ENCODE measurements at regions of chr5 and their contacts with region 1.

Region 1: DNA sequence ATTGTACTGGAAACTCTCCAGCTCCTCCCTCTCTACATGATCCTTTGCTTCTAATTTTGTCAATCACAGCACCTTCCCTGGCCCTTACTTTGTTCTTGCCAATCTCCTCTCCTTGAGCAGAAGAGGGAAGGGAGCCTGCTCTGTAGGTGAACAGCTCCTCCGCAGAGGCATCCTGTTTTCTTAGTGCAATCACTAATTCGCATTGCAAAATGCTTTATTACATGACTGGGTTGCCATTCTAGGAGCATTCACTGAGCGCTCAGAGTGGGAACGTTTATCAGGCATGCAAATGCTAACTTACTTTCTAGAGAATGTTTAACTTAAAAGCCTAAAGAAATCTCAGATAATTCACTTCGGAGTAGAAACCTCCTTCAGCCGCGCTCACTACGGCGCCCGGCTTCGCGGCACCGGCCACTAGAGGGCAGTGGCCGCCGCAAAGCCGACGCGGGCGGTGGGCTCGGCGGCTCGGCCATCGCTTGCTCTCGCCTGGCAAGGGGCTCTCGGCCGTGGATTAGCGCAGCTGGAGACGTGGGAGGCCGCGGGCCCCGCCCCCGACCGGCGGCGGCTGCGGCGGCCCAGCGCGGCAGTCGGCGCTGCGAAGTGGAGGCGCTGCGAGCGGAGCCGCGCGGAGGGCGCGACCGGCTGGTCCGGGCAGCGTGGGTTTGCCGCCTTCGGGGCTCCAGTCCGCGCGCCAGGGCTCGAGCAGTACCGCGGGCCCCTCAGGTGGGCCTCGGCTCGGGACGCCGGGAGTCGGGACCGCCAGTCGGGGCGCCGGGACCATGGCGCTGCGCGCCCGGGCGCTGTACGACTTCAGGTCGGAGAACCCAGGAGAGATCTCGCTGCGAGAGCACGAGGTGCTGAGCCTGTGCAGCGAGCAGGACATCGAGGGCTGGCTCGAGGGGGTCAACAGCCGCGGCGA is at the start of gene SNX18:
- DNase-seq: peak; percentile 24
- ATAC-seq: peak; percentile 98
- H3K4me3 ChIP-seq: peak within 1 kb of the TSS; percentile 73; the same call in 1 of the 2 replicates
- H3K27ac ChIP-seq: peak within 1 kb of the TSS; percentile 33; the same call in 1 of the 2 replicates
- H3K4me1 ChIP-seq: no peaks in the 10 kb centered on the region
- H3K27me3 ChIP-seq: no peaks in the 10 kb centered on the region
- CTCF ChIP-seq: peak; percentile 89 to 98 (median 95); a peak in 5 of 6 replicates
- EP300 ChIP-seq: no peak
- POLR2A ChIP-seq: peak; percentile 73
- RAD21 ChIP-seq: peak; percentile 99
- polyA plus RNA-seq, gene SNX18: 0.27 to 0.32 TPM

Region 2: GRCh38 chr5:54224103-54224826 is 293.2 kb before region 1 on chr5:
- CTCF ChIA-PET with region 1: no interaction called
- POLR2A ChIA-PET with region 1: no interaction called
- RAD21 ChIA-PET with region 1: no interaction called
- SMC1A ChIA-PET with region 1: no interaction called
- in situ Hi-C with region 1: no loop called
- intact Hi-C with region 1: no loop called
- DNase-seq: no peak
- ATAC-seq: no peak
- H3K4me3 ChIP-seq: no peak overlapping the region
- H3K27ac ChIP-seq: no peak overlapping the region
- H3K4me1 ChIP-seq: no peaks in the 10 kb centered on the region
- H3K27me3 ChIP-seq: no peaks in the 10 kb centered on the region
- CTCF ChIP-seq: no peak
- EP300 ChIP-seq: no peak
- POLR2A ChIP-seq: no peak
- RAD21 ChIP-seq: no peak

Region 3: DNA sequence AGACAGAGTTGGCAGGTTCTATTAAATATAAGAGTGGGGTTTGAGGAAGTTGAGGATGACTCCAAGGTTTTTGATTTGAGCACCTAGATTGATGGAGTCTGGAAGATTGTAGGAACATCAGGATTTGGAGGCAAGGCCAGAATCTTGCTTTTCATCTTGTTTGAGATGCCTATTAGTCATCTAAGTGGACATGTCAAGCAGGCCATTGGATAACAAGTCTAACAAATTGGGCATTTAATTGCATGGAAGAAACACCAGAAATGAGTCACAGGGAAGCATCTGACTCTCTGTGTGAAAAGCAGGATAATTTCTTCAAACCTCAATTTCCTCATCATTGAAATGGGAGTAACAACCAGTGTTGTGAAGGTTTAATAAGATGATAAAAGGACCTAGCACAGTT is 153.8 kb before region 1 on chr5:
- CTCF ChIA-PET with region 1: no interaction called
- POLR2A ChIA-PET with region 1: no interaction called
- RAD21 ChIA-PET with region 1: no interaction called
- SMC1A ChIA-PET with region 1: no interaction called
- in situ Hi-C with region 1: no loop called
- intact Hi-C with region 1: no loop called
- DNase-seq: no peak
- ATAC-seq: no peak
- H3K4me3 ChIP-seq: no peak overlapping the region
- H3K27ac ChIP-seq: no peak overlapping the region
- H3K4me1 ChIP-seq: no peaks in the 10 kb centered on the region
- H3K27me3 ChIP-seq: no peaks in the 10 kb centered on the region
- CTCF ChIP-seq: no peak
- EP300 ChIP-seq: no peak
- POLR2A ChIP-seq: no peak
- RAD21 ChIP-seq: no peak

Region 4: GRCh38 chr5:54480296-54480695 is 37.1 kb before region 1 on chr5:
- CTCF ChIA-PET with region 1: no interaction called
- POLR2A ChIA-PET with region 1: no interaction called
- RAD21 ChIA-PET with region 1: no interaction called
- SMC1A ChIA-PET with region 1: no interaction called
- in situ Hi-C with region 1: no loop called
- intact Hi-C with region 1: no loop called
- DNase-seq: no peak
- ATAC-seq: no peak
- H3K4me3 ChIP-seq: no peak overlapping the region
- H3K27ac ChIP-seq: no peak overlapping the region
- H3K4me1 ChIP-seq: no peaks in the 10 kb centered on the region
- H3K27me3 ChIP-seq: no peaks in the 10 kb centered on the region
- CTCF ChIP-seq: no peak
- EP300 ChIP-seq: no peak
- POLR2A ChIP-seq: no peak
- RAD21 ChIP-seq: no peak

Region 5: GRCh38 chr5:54646356-54647101 is 129.1 kb after region 1 on chr5:
- CTCF ChIA-PET with region 1: no interaction called
- POLR2A ChIA-PET with region 1: no interaction called
- RAD21 ChIA-PET with region 1: no interaction called
- SMC1A ChIA-PET with region 1: no interaction called
- in situ Hi-C with region 1: no loop called
- intact Hi-C with region 1: loop called (anchors 5 kb)
- DNase-seq: peak; percentile 48
- ATAC-seq: peak; percentile 96
- H3K4me3 ChIP-seq: peak overlapping the region; percentile 5; the same call in 1 of the 2 replicates
- H3K27ac ChIP-seq: peak overlapping the region; percentile 50; the same call in 1 of the 2 replicates
- H3K4me1 ChIP-seq: peaks cover 20% of the 10 kb centered on the region
- H3K27me3 ChIP-seq: no peaks in the 10 kb centered on the region
- CTCF ChIP-seq: no peak
- EP300 ChIP-seq: peak in 1 of 2 experiments; percentile 39; a peak in 1 of 4 replicates
- POLR2A ChIP-seq: no peak
- RAD21 ChIP-seq: no peak

Region 6: DNA sequence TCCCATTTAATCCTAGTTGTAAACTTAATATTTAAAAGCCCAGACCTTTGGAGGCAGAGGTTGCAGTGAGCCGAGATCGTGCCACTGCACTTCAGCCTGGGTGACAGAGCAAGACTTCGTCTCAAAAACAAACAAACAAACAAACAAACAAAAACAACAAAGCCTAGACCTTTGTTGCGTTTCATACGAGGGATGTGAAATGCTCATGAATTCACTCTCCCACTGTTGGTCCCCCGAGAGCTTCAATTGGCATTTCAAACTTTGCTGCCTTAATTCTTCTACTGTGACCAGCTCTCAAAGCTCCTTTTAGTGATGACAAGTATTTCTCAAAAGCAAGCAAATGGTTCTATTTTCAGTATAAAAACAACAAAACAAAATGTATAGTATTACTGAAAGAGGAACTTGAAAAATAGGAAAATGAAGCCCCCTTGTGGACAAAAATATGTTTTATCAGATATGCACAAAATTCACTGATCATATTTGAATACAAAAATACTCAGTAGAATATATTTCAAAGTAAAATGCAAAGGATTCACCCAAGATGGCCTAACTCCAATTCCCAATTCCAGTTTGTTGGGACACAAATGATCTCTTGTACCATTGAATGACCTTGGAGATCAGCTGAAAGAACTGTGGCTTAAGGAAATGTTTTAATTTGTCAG is 327.6 kb after region 1 on chr5:
- CTCF ChIA-PET with region 1: interaction called, 71 read pairs
- POLR2A ChIA-PET with region 1: no interaction called
- RAD21 ChIA-PET with region 1: interaction called, 25 read pairs
- SMC1A ChIA-PET with region 1: interaction called, 34 read pairs
- in situ Hi-C with region 1: loop called (anchors 5 kb)
- intact Hi-C with region 1: loop called (anchors 1 kb)
- DNase-seq: peak; percentile 4
- ATAC-seq: peak; percentile 50; the same call in 2 of the 3 replicates
- H3K4me3 ChIP-seq: no peak overlapping the region
- H3K27ac ChIP-seq: no peak overlapping the region
- H3K4me1 ChIP-seq: no peaks in the 10 kb centered on the region
- H3K27me3 ChIP-seq: no peaks in the 10 kb centered on the region
- CTCF ChIP-seq: peak in 1 of 3 experiments; percentile 50; a peak in 3 of 6 replicates
- EP300 ChIP-seq: no peak
- POLR2A ChIP-seq: no peak
- RAD21 ChIP-seq: peak; percentile 68

Region 7: GRCh38 chr5:54852007-54852406 is 334.6 kb after region 1 on chr5:
- CTCF ChIA-PET with region 1: no interaction called
- POLR2A ChIA-PET with region 1: no interaction called
- RAD21 ChIA-PET with region 1: no interaction called
- SMC1A ChIA-PET with region 1: no interaction called
- in situ Hi-C with region 1: loop called (anchors 5 kb)
- intact Hi-C with region 1: no loop called
- DNase-seq: no peak
- ATAC-seq: no peak
- H3K4me3 ChIP-seq: no peak overlapping the region
- H3K27ac ChIP-seq: no peak overlapping the region
- H3K4me1 ChIP-seq: no peaks in the 10 kb centered on the region
- H3K27me3 ChIP-seq: no peaks in the 10 kb centered on the region
- CTCF ChIP-seq: no peak
- EP300 ChIP-seq: no peak
- POLR2A ChIP-seq: no peak
- RAD21 ChIP-seq: no peak

Region 8: DNA sequence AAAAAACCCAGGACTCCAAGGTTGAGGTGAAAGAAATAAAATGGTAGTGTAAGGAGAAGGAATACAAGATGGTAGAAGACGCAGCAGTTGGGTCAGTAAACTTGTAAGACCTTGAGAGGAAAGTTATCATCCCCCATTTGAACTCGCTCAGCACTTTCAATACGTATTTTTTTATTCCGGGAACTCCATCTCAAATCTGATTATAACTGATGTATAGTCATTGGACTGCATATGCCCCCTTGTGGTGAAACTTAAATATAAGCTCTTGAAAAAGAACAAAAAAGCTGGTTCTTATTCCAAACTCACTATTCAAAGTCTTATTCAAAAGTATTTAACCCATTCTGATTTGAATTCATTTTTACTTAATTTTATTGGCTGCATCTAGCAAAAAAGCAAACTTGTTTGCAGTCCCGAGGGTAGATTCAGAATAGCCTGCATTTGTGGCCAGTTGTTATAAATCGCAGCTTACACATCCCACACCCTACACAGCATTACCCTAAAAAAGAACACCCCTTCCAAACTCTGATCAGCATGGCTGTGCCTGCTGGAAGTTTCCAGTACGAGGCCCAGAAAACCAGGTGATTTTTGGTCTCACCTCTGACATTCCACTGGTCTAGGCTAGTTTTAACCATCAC is 350.0 kb after region 1 on chr5:
- CTCF ChIA-PET with region 1: interaction called, 33 read pairs
- POLR2A ChIA-PET with region 1: no interaction called
- RAD21 ChIA-PET with region 1: interaction called, 18 read pairs
- SMC1A ChIA-PET with region 1: interaction called, 27 read pairs
- in situ Hi-C with region 1: no loop called
- intact Hi-C with region 1: loop called (anchors 1 kb)
- DNase-seq: no peak
- ATAC-seq: peak; percentile 38; the same call in 1 of the 3 replicates
- H3K4me3 ChIP-seq: no peak overlapping the region
- H3K27ac ChIP-seq: no peak overlapping the region
- H3K4me1 ChIP-seq: no peaks in the 10 kb centered on the region
- H3K27me3 ChIP-seq: peaks cover 2 to 4% of the 10 kb centered on the region in 2 experiments; a peak in 2 of 4 replicates
- CTCF ChIP-seq: peak; percentile 36 to 47 (median 46); a peak in 5 of 6 replicates
- EP300 ChIP-seq: no peak
- POLR2A ChIP-seq: no peak
- RAD21 ChIP-seq: peak; percentile 56

Region 9: DNA sequence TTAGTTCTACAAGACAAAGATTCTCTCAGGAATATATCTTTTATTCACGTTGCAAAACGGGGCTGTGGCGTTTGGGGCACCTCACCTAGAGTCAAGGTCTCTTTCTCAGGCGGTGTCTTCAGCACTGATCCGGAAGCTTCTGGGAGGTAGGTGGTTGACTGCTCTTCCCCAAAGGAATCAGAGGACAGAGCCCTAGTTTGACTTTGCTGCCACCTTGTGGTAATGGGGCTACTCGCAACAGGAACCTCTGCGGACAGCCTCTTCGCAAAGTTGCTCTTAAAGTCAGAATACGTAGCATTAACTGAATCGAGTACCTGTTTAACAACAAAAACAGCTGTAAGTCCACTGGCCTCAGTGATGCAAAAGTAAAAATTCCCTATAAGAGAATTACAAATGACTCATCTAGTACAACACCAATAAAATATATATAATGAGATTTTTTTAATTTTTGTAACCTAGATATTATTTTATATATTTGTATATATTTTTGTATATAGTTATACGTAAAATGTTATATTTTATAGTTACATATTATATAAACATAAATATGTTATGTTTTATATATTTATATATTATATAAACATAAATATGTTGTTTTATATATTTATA is 629.2 kb after region 1 on chr5:
- CTCF ChIA-PET with region 1: interaction called, 3 read pairs
- POLR2A ChIA-PET with region 1: no interaction called
- RAD21 ChIA-PET with region 1: no interaction called
- SMC1A ChIA-PET with region 1: interaction called, 3 read pairs
- in situ Hi-C with region 1: loop called (anchors 5 kb)
- intact Hi-C with region 1: loop called (anchors 1 kb)
- DNase-seq: peak; percentile 31
- ATAC-seq: peak; percentile 97
- H3K4me3 ChIP-seq: no peak overlapping the region
- H3K27ac ChIP-seq: no peak overlapping the region
- H3K4me1 ChIP-seq: no peaks in the 10 kb centered on the region
- H3K27me3 ChIP-seq: 0 out of 4 replicates have a peak, but pooled peaks cover 0 to 2% of the 10 kb centered on the region in 2 experiments
- CTCF ChIP-seq: peak; percentile 88 to 94 (median 92)
- EP300 ChIP-seq: no peak
- POLR2A ChIP-seq: no peak
- RAD21 ChIP-seq: peak; percentile 92

Region 10: GRCh38 chr5:55151923-55152842 is 634.8 kb after region 1 on chr5:
- CTCF ChIA-PET with region 1: no interaction called
- POLR2A ChIA-PET with region 1: no interaction called
- RAD21 ChIA-PET with region 1: no interaction called
- SMC1A ChIA-PET with region 1: no interaction called
- in situ Hi-C with region 1: loop called (anchors 5 kb)
- intact Hi-C with region 1: no loop called
- DNase-seq: no peak
- ATAC-seq: no peak
- H3K4me3 ChIP-seq: no peak overlapping the region
- H3K27ac ChIP-seq: no peak overlapping the region
- H3K4me1 ChIP-seq: no peaks in the 10 kb centered on the region
- H3K27me3 ChIP-seq: 0 out of 4 replicates have a peak, but pooled peaks cover 0 to 2% of the 10 kb centered on the region in 2 experiments
- CTCF ChIP-seq: no peak
- EP300 ChIP-seq: no peak
- POLR2A ChIP-seq: no peak
- RAD21 ChIP-seq: no peak

Measured in GM12878 (cell line).